Activated CD8-positive, alpha-beta T cell treated with anti-CD3 and anti-CD28 coated beads for 36 hours (primary cell): ENCODE measurements at regions of chr10 and their contacts with region 1.

Region 1: DNA sequence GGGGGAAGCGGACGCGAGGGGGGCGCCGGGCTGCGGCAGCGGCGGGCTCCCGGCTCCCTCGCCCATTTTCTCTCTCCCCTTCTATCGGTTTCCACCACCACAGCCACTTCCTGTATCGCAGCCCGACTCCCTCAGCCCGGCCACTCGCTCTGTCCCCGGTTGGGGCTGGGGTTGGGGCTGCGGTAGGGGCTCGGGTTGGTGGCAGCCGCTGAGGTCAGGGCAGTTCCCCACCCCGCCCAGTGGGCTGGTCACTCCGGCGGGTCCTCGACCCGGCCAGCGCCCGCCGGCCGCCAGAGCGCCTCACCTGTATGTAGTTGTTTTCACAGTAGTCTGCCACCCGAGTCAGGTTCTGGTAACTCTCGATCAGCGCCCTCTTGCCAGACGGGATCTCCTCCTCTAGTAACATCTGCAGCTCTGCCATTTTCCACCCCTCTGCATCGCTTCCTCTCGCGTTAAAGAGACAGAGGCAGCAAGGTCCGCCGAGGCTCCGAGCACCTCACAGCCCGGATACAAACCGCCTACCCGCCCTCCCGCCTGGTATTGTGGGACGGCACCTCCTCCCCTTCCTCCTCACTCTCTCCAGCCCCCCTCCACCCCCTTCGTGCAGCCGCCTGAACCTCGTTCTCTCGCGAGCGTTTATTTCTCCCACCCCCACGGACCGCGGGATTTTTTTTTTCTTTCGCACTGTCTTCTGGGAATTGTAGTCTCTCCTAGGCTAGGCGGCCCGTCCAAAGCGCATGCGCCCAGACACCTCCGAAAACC is at the start of gene ABI1:
- DNase-seq: peak; percentile 99
- ATAC-seq: peak; percentile 93
- H3K4me3 Mint-ChIP-seq: peak within 1 kb of the TSS; percentile 90
- H3K27ac Mint-ChIP-seq: peak within 1 kb of the TSS; percentile 100
- H3K4me1 Mint-ChIP-seq: peaks cover 23% of the 10 kb centered on the region
- H3K27me3 Mint-ChIP-seq: peaks cover 3% of the 10 kb centered on the region
- CTCF ChIP-seq: no peak
- total RNA-seq, gene ABI1: 32.4 to 37.2 TPM

Region 2: GRCh38 chr10:26479766-26480492 is 380.7 kb before region 1 on chr10:
- CTCF ChIA-PET with region 1: no interaction called
- POLR2A ChIA-PET with region 1: no interaction called
- intact Hi-C with region 1: no loop called
- DNase-seq: peak; percentile 55
- ATAC-seq: peak; percentile 61
- H3K4me3 Mint-ChIP-seq: peak overlapping the region; percentile 26
- H3K27ac Mint-ChIP-seq: peak overlapping the region; percentile 96
- H3K4me1 Mint-ChIP-seq: peaks cover 72% of the 10 kb centered on the region
- H3K27me3 Mint-ChIP-seq: no peaks in the 10 kb centered on the region
- CTCF ChIP-seq: no peak

Region 3: GRCh38 chr10:26737730-26738129 is 122.9 kb before region 1 on chr10:
- CTCF ChIA-PET with region 1: interaction called, 3 read pairs
- POLR2A ChIA-PET with region 1: no interaction called
- intact Hi-C with region 1: loop called (anchors 5 kb)
- DNase-seq: peak; percentile 60
- ATAC-seq: peak; percentile 92
- H3K4me3 Mint-ChIP-seq: no peak overlapping the region
- H3K27ac Mint-ChIP-seq: peak overlapping the region; percentile 80
- H3K4me1 Mint-ChIP-seq: peaks cover 34% of the 10 kb centered on the region
- H3K27me3 Mint-ChIP-seq: no peaks in the 10 kb centered on the region
- CTCF ChIP-seq: no peak

Region 4: DNA sequence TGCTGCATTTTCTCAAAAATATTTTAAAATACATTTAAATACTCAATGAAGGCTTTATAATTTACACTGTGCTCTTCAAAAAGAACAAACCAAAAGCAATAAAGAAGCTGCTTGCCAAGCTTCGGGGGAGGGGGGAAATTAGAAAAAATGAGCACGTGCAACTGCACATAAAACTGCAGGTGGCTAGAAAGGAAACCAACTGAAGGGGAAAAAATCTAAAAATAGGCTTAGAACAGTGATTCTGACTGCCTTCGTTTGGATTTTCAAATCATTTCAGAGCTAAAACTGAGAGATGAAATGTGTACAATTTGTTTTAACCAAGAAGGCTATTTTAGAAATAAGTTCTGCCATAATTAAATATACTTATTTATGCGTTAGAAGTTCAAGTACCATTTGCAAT is 61.3 kb before region 1 on chr10:
- CTCF ChIA-PET with region 1: no interaction called
- POLR2A ChIA-PET with region 1: interaction called, 3 read pairs
- intact Hi-C with region 1: loop called (anchors 10 kb)
- DNase-seq: peak; percentile 48
- ATAC-seq: no peak
- H3K4me3 Mint-ChIP-seq: peak overlapping the region; percentile 27
- H3K27ac Mint-ChIP-seq: peak overlapping the region; percentile 74
- H3K4me1 Mint-ChIP-seq: peaks cover 63% of the 10 kb centered on the region
- H3K27me3 Mint-ChIP-seq: no peaks in the 10 kb centered on the region
- CTCF ChIP-seq: no peak

Region 5: DNA sequence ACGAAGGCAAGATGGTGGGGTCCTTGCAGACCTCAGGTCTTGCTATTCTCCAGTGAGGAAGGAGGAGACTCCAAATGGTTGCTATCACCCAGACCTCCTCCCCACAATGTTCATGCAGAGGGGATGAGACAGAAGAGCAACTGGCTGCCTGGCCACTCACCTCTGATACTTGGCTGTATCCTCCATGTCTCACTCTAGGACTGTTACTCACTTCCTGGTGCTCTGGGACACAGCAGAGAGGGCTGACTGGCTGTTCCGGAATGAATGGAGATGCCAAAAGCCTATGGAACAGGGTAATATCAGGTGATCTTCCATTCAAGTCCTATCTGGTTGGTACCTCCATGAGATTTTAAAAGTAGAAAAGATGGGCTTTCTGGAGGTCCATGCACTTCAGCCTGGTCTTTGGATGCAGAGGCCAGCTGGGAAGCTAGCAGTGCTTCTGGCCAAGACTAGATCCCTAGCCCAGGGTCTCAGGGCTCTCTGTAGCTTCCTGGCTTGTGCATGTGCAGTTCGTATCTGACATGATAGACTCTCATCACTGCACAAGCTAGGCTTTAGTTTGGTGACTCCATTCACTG is 27.1 kb after region 1 on chr10:
- CTCF ChIA-PET with region 1: no interaction called
- POLR2A ChIA-PET with region 1: no interaction called
- intact Hi-C with region 1: no loop called
- DNase-seq: no peak
- ATAC-seq: no peak
- H3K4me3 Mint-ChIP-seq: no peak overlapping the region
- H3K27ac Mint-ChIP-seq: no peak overlapping the region
- H3K4me1 Mint-ChIP-seq: no peaks in the 10 kb centered on the region
- H3K27me3 Mint-ChIP-seq: peaks cover 2% of the 10 kb centered on the region
- CTCF ChIP-seq: no peak